ENCODE measurements at regions of chr6 and their contacts with region 1.

Region 1: GRCh38 chr6:74785236-74785635 is 420.6 kb downstream of the COL12A1 start:
- DNase-seq: no peak
- H3K4me3 ChIP-seq: no peak overlapping the region
- H3K27ac ChIP-seq: no peak overlapping the region
- H3K4me1 ChIP-seq: no peaks in the 10 kb centered on the region
- H3K27me3 ChIP-seq: no peaks in the 10 kb centered on the region
- CTCF ChIP-seq: no peak

Region 2: GRCh38 chr6:74534465-74535211 is 250.6 kb before region 1 on chr6:
- CTCF ChIA-PET with region 1: interaction called, 10 read pairs
- POLR2A ChIA-PET with region 1: no interaction called
- intact Hi-C with region 1: no loop called
- DNase-seq: no peak
- H3K4me3 ChIP-seq: no peak overlapping the region
- H3K27ac ChIP-seq: no peak overlapping the region
- H3K4me1 ChIP-seq: no peaks in the 10 kb centered on the region
- H3K27me3 ChIP-seq: no peaks in the 10 kb centered on the region
- CTCF ChIP-seq: no peak

Region 3: DNA sequence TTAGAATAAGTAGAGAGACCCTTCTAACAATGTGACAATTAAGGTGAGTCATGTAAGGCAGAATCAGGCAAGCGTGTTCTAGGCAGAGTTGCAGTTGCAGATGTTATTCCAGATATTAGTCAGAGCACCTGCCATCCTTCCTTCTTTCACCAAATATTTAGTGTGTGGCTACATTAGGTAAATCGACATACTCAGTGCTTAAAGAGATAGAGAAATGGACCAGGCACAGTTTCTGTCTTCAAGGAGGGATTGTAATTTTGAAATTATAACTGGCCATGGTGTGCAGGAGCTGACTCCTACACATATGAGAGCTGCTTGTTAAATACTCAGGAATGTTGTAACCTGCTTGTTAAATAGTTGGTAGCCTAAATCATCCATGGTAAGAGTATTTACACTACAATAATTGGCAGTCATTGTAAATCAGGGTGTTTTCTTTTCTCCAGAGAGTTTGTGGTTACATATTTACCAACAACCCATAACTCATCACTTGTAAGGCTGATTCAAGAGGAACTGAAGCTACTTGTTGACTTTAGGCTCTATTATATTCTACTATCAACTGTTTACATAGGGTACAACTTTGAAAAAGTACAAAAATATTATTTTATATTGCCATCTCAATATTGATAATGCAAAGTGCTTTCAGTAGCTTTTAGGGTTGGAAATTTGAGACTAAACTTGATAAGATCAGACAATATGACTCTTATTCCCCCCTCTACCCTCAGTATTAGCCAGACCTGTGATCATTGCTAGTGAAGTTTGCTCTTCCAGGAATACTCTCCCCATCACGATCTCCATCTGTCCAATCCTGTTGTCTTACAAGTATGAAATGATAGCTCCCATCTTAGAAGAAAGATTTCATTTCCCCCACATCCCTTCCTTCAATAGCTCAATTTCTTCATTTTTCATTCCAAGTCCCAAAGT is 186.5 kb before region 1 on chr6:
- CTCF ChIA-PET with region 1: no interaction called
- POLR2A ChIA-PET with region 1: no interaction called
- intact Hi-C with region 1: no loop called
- DNase-seq: no peak
- H3K4me3 ChIP-seq: no peak overlapping the region
- H3K27ac ChIP-seq: no peak overlapping the region
- H3K4me1 ChIP-seq: peaks cover 4% of the 10 kb centered on the region
- H3K27me3 ChIP-seq: no peaks in the 10 kb centered on the region
- CTCF ChIP-seq: no peak

Region 4: DNA sequence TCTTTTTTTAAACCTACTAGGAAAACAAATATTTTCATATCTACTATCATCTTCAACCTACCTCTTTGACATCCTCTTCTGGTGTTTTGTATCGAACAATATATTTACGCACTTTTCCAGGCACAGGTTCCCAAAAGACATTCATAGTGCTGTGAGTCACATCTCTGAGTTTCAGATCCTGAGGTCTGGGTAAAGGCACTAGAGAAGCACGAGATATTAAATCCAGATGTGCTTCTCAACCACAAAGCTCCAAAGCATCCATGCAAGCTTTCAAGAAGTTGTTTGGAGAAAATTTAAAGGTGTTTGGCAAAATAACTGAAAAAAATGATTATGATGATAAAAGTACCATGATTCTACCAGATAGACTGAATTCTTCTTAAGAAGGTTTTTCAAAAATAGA is 358.0 kb after region 1 on chr6:
- CTCF ChIA-PET with region 1: no interaction called
- POLR2A ChIA-PET with region 1: no interaction called
- intact Hi-C with region 1: no loop called
- DNase-seq: no peak
- H3K4me3 ChIP-seq: no peak overlapping the region
- H3K27ac ChIP-seq: no peak overlapping the region
- H3K4me1 ChIP-seq: no peaks in the 10 kb centered on the region
- H3K27me3 ChIP-seq: no peaks in the 10 kb centered on the region
- CTCF ChIP-seq: no peak

Measured in A673 (cell line).